Aorta (tissue), 5 donors: ENCODE measurements at regions of chr4 and their contacts with region 1.

Region 1: GRCh38 chr4:53507671-53508286 is 83.5 kb downstream of the LNX1 start:
- DNase-seq: peak; percentile 89 to 93
- ATAC-seq: peak; percentile 93
- H3K4me3 ChIP-seq: peak overlapping the region in 1 of 2 donors; percentile 18
- H3K27ac ChIP-seq: peak overlapping the region in 1 of 2 donors; percentile 37
- H3K4me1 ChIP-seq: no peaks in the 10 kb centered on the region
- H3K27me3 ChIP-seq: no peaks in the 10 kb centered on the region

Region 2: DNA sequence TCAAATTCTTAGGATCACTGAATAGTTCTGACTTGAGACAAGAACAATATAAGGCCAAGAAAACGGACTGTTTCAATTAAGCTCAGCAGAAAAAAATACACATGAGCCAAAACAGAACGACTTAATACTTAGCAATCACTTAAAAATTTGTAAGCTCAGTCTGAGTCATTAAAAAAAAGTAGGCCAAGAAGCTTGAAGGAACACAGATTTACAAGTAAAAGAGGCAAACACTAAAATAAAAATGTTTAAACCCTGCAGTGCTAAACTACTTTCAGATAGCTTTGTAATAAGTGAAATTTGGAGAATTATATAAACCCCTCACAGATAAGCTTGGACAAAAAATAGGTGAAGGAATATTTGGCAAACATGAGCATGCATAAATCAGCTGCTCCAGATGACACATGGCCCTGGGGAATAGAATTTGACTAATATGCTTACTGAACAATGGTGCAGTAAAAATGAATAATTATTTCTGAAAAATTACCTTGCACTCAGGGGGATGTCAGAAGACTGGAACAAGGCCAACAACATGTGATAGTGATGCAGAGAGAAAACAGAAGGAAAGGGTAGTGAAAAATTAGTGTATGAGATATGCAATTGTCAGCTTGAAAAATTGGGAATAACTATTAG is 33.9 kb after region 1 on chr4:
- intact Hi-C with region 1: loop called (anchors 5 kb)
- DNase-seq: no peak
- ATAC-seq: peak; percentile 73
- H3K4me3 ChIP-seq: no peak overlapping the region
- H3K27ac ChIP-seq: no peak overlapping the region
- H3K4me1 ChIP-seq: peaks cover 0 to 6% of the 10 kb centered on the region in 2 donors
- H3K27me3 ChIP-seq: no peaks in the 10 kb centered on the region

Region 3: GRCh38 chr4:53551958-53552357 is 44.2 kb after region 1 on chr4:
- intact Hi-C with region 1: loop called in 1 of 2 experiments (anchors 5 kb)
- DNase-seq: no peak
- ATAC-seq: no peak
- H3K4me3 ChIP-seq: no peak overlapping the region
- H3K27ac ChIP-seq: no peak overlapping the region
- H3K4me1 ChIP-seq: peaks cover 3 to 4% of the 10 kb centered on the region in 2 donors
- H3K27me3 ChIP-seq: no peaks in the 10 kb centered on the region

Region 4: DNA sequence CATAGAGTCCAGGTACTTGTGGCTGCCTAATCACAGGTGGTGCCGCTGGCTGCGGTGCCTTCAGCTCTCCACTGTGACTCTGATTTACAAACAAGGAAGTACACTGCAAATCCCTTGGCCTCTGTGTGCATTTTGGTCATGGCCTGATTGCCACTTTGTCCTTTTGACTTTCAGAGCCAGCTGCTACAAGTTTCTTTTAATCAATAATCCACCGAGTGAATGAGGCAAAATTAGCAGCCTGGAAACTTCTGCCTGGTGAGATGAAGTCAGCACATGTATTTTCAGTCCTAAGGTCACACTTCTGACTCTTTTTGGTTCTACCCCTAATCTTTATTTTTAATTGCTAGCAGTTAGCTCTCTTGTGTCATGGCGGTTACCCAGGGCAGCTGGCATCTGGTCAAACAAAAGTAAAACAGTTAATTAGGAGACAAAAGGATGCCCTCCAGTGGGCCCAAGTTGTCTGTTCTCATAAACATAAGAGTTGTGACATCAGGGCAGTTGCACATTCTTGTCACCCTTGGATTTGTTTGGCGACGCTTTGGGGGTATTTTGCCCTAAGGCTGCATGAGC is 145.8 kb after region 1 on chr4:
- intact Hi-C with region 1: loop called in 1 of 2 experiments (anchors 10 kb)
- DNase-seq: no peak
- ATAC-seq: no peak
- H3K4me3 ChIP-seq: no peak overlapping the region
- H3K27ac ChIP-seq: no peak overlapping the region
- H3K4me1 ChIP-seq: no peaks in the 10 kb centered on the region
- H3K27me3 ChIP-seq: no peaks in the 10 kb centered on the region

Region 5: GRCh38 chr4:53702334-53703266 is 194.8 kb after region 1 on chr4:
- intact Hi-C with region 1: loop called in 1 of 2 experiments (anchors 5 kb)
- DNase-seq: peak; percentile 88 to 90
- ATAC-seq: peak; percentile 92
- H3K4me3 ChIP-seq: no peak overlapping the region
- H3K27ac ChIP-seq: peak overlapping the region in 1 of 2 donors; percentile 22
- H3K4me1 ChIP-seq: no peaks in the 10 kb centered on the region
- H3K27me3 ChIP-seq: no peaks in the 10 kb centered on the region